CD8-positive, alpha-beta T cell (primary cell): ENCODE measurements at regions of chr3 and their contacts with region 1.

Region 1: GRCh38 chr3:143001369-143002082 is at the start of gene U2SURP:
- DNase-seq: peak; percentile 82 to 97 (median 90)
- ATAC-seq: peak; percentile 93
- H3K4me3 ChIP-seq: peak within 1 kb of the TSS; percentile 81 to 92
- H3K4me3 Mint-ChIP-seq: peak within 1 kb of the TSS; percentile 99
- H3K27ac ChIP-seq: peak within 1 kb of the TSS; percentile 91 to 92
- H3K27ac Mint-ChIP-seq: peak within 1 kb of the TSS; percentile 99
- H3K4me1 ChIP-seq: peaks cover 34% of the 10 kb centered on the region
- H3K4me1 Mint-ChIP-seq: peaks cover 42% of the 10 kb centered on the region
- H3K27me3 ChIP-seq: no peaks in the 10 kb centered on the region
- H3K27me3 Mint-ChIP-seq: no peaks in the 10 kb centered on the region
- CTCF ChIP-seq: no peak
- total RNA-seq, gene U2SURP: 186 TPM

Region 2: DNA sequence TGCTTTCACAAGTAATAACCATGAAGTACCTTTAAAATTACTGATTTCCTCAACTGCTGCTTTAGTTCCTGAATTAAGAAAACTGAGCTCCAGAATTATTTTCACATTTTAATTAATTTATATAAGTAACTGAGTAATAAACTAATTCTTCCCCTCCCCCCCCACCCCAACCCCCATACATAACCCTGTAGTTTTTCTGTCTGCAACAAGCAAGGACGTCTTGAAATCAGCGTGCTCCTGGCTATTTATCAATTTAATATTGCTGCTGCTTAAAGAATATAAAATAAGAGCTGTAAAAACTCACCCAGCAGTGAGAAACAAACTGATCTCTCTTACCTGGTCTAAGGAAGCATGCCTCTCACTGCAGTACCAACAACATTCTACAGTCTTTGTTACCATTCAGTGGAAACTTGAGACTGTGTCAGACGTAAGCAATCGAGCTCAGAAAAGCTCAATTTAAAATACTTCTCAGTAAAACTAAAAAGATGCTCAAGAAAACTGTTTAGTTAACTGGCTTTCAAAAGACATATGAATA is 973.2 kb before region 1 on chr3:
- CTCF ChIA-PET with region 1: no interaction called
- POLR2A ChIA-PET with region 1: interaction called, 3 read pairs
- intact Hi-C with region 1: loop called (anchors 2 to 5 kb)
- DNase-seq: peak in 5 of 9 experiments; percentile 14 to 77 (median 28)
- ATAC-seq: peak; percentile 88
- H3K4me3 ChIP-seq: peak overlapping the region; percentile 44 to 55
- H3K4me3 Mint-ChIP-seq: peak overlapping the region; percentile 85
- H3K27ac ChIP-seq: no peak overlapping the region
- H3K27ac Mint-ChIP-seq: peak overlapping the region; percentile 69
- H3K4me1 ChIP-seq: peaks cover 6% of the 10 kb centered on the region
- H3K4me1 Mint-ChIP-seq: peaks cover 14% of the 10 kb centered on the region
- H3K27me3 ChIP-seq: no peaks in the 10 kb centered on the region
- H3K27me3 Mint-ChIP-seq: no peaks in the 10 kb centered on the region
- CTCF ChIP-seq: no peak

Region 3: GRCh38 chr3:142509079-142509478 is 492.4 kb before region 1 on chr3:
- CTCF ChIA-PET with region 1: no interaction called
- POLR2A ChIA-PET with region 1: no interaction called
- intact Hi-C with region 1: loop called (anchors 1 to 5 kb)
- DNase-seq: peak in 2 of 9 experiments; percentile 15 to 36
- ATAC-seq: peak; percentile 62
- H3K4me3 ChIP-seq: peak overlapping the region in 1 of 2 experiments; percentile 51
- H3K4me3 Mint-ChIP-seq: peak overlapping the region; percentile 90
- H3K27ac ChIP-seq: peak overlapping the region in 1 of 2 experiments; percentile 74
- H3K27ac Mint-ChIP-seq: peak overlapping the region; percentile 95
- H3K4me1 ChIP-seq: no peaks in the 10 kb centered on the region
- H3K4me1 Mint-ChIP-seq: peaks cover 14% of the 10 kb centered on the region
- H3K27me3 ChIP-seq: no peaks in the 10 kb centered on the region
- H3K27me3 Mint-ChIP-seq: no peaks in the 10 kb centered on the region
- CTCF ChIP-seq: no peak

Region 4: DNA sequence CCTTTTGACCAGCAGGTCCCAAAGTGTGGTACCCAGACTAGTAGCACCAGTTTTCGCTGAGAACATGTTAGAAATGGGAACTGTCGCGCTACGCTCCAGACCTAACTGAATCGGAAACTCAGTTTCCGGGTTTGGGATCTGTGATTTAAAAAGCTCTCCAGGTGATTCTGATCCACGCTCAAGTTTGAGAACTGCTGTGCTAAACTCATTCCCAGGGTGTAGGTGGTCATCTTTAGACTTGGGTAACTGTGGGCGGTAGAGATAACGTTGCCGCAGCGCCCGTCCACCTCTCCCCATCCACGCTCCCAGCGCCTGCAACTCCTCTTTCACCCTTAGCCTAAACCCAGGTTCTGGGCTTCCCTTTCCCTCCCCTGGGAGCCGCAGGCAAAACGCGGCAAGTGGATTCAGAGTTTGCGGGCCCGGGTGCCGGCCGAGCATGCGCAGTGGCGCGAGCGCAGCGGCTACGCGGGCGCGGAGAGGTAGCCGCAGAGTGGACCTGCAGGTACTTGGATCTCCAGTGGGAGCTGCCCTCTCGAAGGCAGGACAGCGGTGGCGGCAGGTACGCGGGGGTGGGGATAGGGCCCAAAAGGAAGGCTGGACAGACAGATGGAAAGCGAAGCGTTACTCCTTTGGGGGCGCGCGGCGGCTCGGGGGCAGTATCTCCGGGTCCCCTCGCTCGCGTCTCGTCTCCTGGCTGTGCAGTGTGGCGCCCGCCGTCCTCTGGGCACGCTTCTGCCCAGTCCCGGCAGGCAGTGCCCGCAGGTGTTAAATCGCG is 405.4 kb before region 1 on chr3 and contains the start of gene PLS1:
- CTCF ChIA-PET with region 1: interaction called, 3 read pairs
- POLR2A ChIA-PET with region 1: interaction called, 4 read pairs
- intact Hi-C with region 1: loop called in 1 of 2 experiments (anchors 1 kb)
- DNase-seq: peak; percentile 74 to 91 (median 83)
- ATAC-seq: peak; percentile 87
- H3K4me3 ChIP-seq: peak within 1 kb of the TSS; percentile 75 to 84
- H3K4me3 Mint-ChIP-seq: peak within 1 kb of the TSS; percentile 96
- H3K27ac ChIP-seq: peak within 1 kb of the TSS; percentile 28 to 34
- H3K27ac Mint-ChIP-seq: peak within 1 kb of the TSS; percentile 89
- H3K4me1 ChIP-seq: peaks cover 17% of the 10 kb centered on the region
- H3K4me1 Mint-ChIP-seq: peaks cover 17% of the 10 kb centered on the region
- H3K27me3 ChIP-seq: no peaks in the 10 kb centered on the region
- H3K27me3 Mint-ChIP-seq: peaks cover 11% of the 10 kb centered on the region
- CTCF ChIP-seq: no peak
- total RNA-seq, gene PLS1: 0.57 to 2.0 TPM

Region 5: GRCh38 chr3:142723968-142724681 is 277.4 kb before region 1 on chr3 and contains the start of gene TRPC1:
- CTCF ChIA-PET with region 1: no interaction called
- POLR2A ChIA-PET with region 1: interaction called, 6 read pairs
- intact Hi-C with region 1: loop called (anchors 1 to 5 kb)
- DNase-seq: peak; percentile 2 to 93 (median 70)
- ATAC-seq: peak; percentile 96
- H3K4me3 ChIP-seq: peak within 1 kb of the TSS; percentile 54 to 63
- H3K4me3 Mint-ChIP-seq: peak within 1 kb of the TSS; percentile 91
- H3K27ac ChIP-seq: peak within 1 kb of the TSS in 1 of 2 experiments; percentile 63
- H3K27ac Mint-ChIP-seq: peak within 1 kb of the TSS; percentile 92
- H3K4me1 ChIP-seq: peaks cover 9% of the 10 kb centered on the region
- H3K4me1 Mint-ChIP-seq: peaks cover 20% of the 10 kb centered on the region
- H3K27me3 ChIP-seq: peaks cover 0 to 3% of the 10 kb centered on the region in 2 experiments
- H3K27me3 Mint-ChIP-seq: peaks cover 28% of the 10 kb centered on the region
- CTCF ChIP-seq: no peak
- total RNA-seq, gene TRPC1: 3.3 to 3.4 TPM

Region 6: DNA sequence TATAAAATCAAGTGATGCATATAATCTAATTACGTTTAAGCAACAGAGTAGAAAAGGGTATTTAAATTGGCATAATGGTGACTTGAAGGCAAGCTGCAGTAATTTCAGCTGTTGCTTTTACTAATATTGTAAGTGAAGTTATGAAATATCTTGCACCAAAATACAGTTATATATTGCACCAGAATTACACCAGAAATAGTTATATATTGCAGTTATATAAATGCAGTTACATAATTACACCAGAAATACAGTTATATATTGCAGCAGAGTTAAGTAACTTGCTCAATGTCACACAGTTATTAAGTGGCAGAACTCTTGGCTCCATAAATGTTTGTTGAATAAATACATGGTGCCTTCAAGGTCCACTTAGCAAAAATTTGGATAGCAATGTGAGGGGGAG is 164.0 kb before region 1 on chr3:
- CTCF ChIA-PET with region 1: no interaction called
- POLR2A ChIA-PET with region 1: no interaction called
- intact Hi-C with region 1: no loop called
- DNase-seq: no peak
- ATAC-seq: no peak
- H3K4me3 ChIP-seq: no peak overlapping the region
- H3K4me3 Mint-ChIP-seq: no peak overlapping the region
- H3K27ac ChIP-seq: no peak overlapping the region
- H3K27ac Mint-ChIP-seq: no peak overlapping the region
- H3K4me1 ChIP-seq: no peaks in the 10 kb centered on the region
- H3K4me1 Mint-ChIP-seq: no peaks in the 10 kb centered on the region
- H3K27me3 ChIP-seq: no peaks in the 10 kb centered on the region
- H3K27me3 Mint-ChIP-seq: peaks cover 13% of the 10 kb centered on the region
- CTCF ChIP-seq: no peak

Region 7: DNA sequence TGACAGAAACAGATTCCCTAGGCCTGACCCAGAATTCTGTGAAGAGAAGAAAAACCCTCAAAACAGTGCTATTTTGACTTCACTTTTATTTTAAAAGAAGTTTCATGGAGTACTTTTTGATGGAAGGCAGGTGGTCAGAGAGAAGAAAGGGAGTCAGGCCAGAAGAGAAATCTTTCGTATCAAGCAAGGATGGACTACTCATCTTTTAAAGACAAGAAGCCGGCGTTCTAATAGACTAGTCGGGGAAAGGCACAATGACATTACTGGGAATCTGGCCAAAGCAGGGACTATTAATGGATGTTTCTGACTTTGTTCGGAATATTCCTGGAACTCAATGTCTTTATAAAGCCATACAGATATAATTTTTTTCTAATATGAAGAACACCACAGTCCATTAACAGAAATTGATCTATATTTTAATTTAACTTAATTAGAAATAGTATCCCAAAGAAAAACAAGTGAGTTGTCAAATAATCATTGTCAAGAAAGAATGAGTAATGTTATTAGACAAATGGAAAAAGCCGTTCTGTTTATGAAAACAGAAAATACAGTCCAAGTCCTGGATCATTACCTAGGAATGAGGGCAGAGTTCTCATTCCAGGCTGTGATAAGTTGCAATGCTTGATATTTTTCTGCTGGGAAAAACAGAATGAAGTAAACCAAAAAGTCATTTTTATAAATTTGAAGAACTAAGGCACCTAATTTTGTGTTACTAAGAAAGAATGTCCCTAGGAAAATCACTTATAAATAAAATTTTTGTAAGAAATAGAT is 88.9 kb before region 1 on chr3:
- CTCF ChIA-PET with region 1: no interaction called
- POLR2A ChIA-PET with region 1: no interaction called
- intact Hi-C with region 1: no loop called
- DNase-seq: no peak
- ATAC-seq: no peak
- H3K4me3 ChIP-seq: no peak overlapping the region
- H3K4me3 Mint-ChIP-seq: no peak overlapping the region
- H3K27ac ChIP-seq: no peak overlapping the region
- H3K27ac Mint-ChIP-seq: no peak overlapping the region
- H3K4me1 ChIP-seq: no peaks in the 10 kb centered on the region
- H3K4me1 Mint-ChIP-seq: no peaks in the 10 kb centered on the region
- H3K27me3 ChIP-seq: no peaks in the 10 kb centered on the region
- H3K27me3 Mint-ChIP-seq: peaks cover 14% of the 10 kb centered on the region
- CTCF ChIP-seq: no peak

Region 8: GRCh38 chr3:143972505-143973255 is 971.2 kb after region 1 on chr3:
- CTCF ChIA-PET with region 1: interaction called, 6 read pairs
- POLR2A ChIA-PET with region 1: interaction called, 15 read pairs
- intact Hi-C with region 1: loop called in 1 of 2 experiments (anchors 5 kb)
- DNase-seq: peak; percentile 28 to 91 (median 52)
- ATAC-seq: no peak
- H3K4me3 ChIP-seq: peak overlapping the region; percentile 75 to 89
- H3K4me3 Mint-ChIP-seq: peak overlapping the region; percentile 95
- H3K27ac ChIP-seq: peak overlapping the region; percentile 69 to 82
- H3K27ac Mint-ChIP-seq: peak overlapping the region; percentile 93
- H3K4me1 ChIP-seq: peaks cover 34% of the 10 kb centered on the region
- H3K4me1 Mint-ChIP-seq: peaks cover 39% of the 10 kb centered on the region
- H3K27me3 ChIP-seq: no peaks in the 10 kb centered on the region
- H3K27me3 Mint-ChIP-seq: peaks cover 5% of the 10 kb centered on the region
- CTCF ChIP-seq: peak; percentile 51